GM12878 (cell line): ENCODE measurements at regions of chr10 and their contacts with region 1.

Region 1: GRCh38 chr10:8279598-8279997 is 225.1 kb downstream of the GATA3 start:
- DNase-seq: no peak
- ATAC-seq: no peak
- H3K4me3 ChIP-seq: no peak overlapping the region
- H3K27ac ChIP-seq: no peak overlapping the region
- H3K4me1 ChIP-seq: no peaks in the 10 kb centered on the region
- H3K27me3 ChIP-seq: no peaks in the 10 kb centered on the region
- CTCF ChIP-seq: no peak
- EP300 ChIP-seq: no peak
- POLR2A ChIP-seq: no peak
- RAD21 ChIP-seq: no peak

Region 2: DNA sequence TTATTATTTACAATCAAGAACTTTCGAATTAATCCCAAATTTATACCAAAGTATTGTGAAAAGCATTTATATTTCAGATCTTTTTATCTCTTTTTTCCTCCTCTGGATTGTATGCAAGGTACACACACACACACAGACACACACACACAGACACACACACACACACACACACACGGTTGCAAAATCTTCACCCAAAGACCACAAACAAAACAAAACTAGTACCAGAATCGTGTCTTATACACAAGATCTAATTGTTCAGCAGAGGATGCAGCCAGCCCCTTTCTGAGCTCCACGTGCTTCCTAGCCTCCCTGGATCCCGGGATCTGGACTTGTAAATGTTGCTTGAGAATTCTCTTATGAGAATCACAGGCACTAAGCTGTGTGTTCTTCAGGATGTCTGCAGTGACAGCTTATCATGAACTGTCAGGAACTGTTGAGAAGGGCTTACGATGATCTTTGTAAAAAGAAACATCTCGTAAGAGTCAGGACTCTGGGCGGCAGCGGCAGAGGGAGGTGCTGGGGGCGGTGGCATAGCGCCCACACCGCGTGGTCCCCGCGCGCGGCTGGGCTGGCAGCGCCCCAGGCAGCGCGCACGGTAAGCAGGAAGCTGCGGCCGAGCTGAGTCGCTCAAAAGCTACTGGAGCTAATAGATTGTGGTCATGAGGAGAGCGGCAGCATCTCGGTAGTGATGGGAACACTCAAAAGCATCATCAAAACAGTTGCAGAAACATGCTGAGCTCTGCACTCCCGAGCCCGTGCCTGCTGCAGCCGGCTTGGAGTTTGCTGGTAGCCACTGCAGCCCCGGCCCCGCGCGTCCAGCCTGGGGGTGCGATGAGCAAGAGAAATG is 52.5 kb after region 1 on chr10:
- CTCF ChIA-PET with region 1: no interaction called
- POLR2A ChIA-PET with region 1: no interaction called
- RAD21 ChIA-PET with region 1: no interaction called
- SMC1A ChIA-PET with region 1: no interaction called
- in situ Hi-C with region 1: no loop called
- intact Hi-C with region 1: loop called (anchors 10 kb)
- DNase-seq: no peak
- ATAC-seq: peak; percentile 93
- H3K4me3 ChIP-seq: 0 out of 2 replicates have a peak overlapping the region, but pooled peaks have one; percentile 5
- H3K27ac ChIP-seq: no peak overlapping the region
- H3K4me1 ChIP-seq: no peaks in the 10 kb centered on the region; the same call in 1 of the 2 replicates
- H3K27me3 ChIP-seq: no peaks in the 10 kb centered on the region; a peak in 2 of 4 replicates
- CTCF ChIP-seq: no peak
- EP300 ChIP-seq: no peak
- POLR2A ChIP-seq: no peak
- RAD21 ChIP-seq: no peak